Prostate gland (tissue), 2 donors: ENCODE measurements at regions of chr7 and their contacts with region 1.

Region 1: GRCh38 chr7:38796626-38797501 is 112.1 kb downstream of the VPS41 start:
- DNase-seq: peak; percentile 43
- H3K4me3 ChIP-seq: no peak overlapping the region
- H3K27ac ChIP-seq: no peak overlapping the region
- H3K4me1 ChIP-seq: no peaks in the 10 kb centered on the region
- H3K27me3 ChIP-seq: no peaks in the 10 kb centered on the region
- CTCF ChIP-seq: peak; percentile 47 to 85 (median 80)
- POLR2A ChIP-seq: no peak

Region 2: DNA sequence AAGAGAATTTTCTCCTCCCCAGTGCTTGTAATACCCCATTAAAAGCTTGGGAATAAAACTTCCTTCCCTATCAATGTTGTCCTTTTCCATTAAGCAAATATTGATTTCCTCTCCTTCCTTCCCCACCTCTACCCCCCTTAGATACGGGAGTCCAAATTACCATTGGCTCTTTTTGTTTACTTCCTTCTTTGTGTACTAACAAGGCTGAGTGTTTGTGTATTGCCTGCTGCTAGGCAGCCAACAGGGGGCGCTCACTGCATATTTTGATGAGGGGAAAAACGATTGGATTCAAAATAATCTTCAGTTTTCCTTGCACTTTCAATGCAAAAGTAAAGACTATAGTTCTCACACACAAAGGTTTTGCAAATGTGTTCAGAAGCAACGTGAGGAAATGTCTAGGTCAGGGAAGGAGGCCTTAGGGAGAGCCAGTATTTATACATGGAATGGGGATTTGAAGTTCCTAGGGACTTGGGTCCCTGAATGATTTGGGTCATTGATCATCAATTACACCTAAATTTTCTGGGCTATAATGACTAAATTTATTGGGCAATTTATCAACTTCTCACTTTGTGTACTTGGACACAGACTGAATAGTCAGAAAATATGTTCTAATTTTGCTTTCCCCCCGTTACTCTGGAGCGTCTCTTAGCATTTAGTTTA is 135.8 kb after region 1 on chr7:
- intact Hi-C with region 1: loop called (anchors 5 kb)
- DNase-seq: peak; percentile 40
- H3K4me3 ChIP-seq: no peak overlapping the region
- H3K27ac ChIP-seq: no peak overlapping the region
- H3K4me1 ChIP-seq: no peaks in the 10 kb centered on the region
- H3K27me3 ChIP-seq: no peaks in the 10 kb centered on the region
- CTCF ChIP-seq: peak; percentile 54 to 73 (median 62)
- POLR2A ChIP-seq: no peak

Region 3: GRCh38 chr7:39465055-39465929 is 668.4 kb after region 1 on chr7:
- intact Hi-C with region 1: loop called (anchors 5 kb)
- DNase-seq: peak; percentile 29
- H3K4me3 ChIP-seq: no peak overlapping the region
- H3K27ac ChIP-seq: no peak overlapping the region
- H3K4me1 ChIP-seq: no peaks in the 10 kb centered on the region
- H3K27me3 ChIP-seq: no peaks in the 10 kb centered on the region
- CTCF ChIP-seq: peak; percentile 12 to 79 (median 66)
- POLR2A ChIP-seq: no peak

Region 4: GRCh38 chr7:39517240-39517639 is 720.4 kb after region 1 on chr7:
- intact Hi-C with region 1: loop called (anchors 2 kb)
- DNase-seq: no peak
- H3K4me3 ChIP-seq: no peak overlapping the region
- H3K27ac ChIP-seq: no peak overlapping the region
- H3K4me1 ChIP-seq: no peaks in the 10 kb centered on the region
- H3K27me3 ChIP-seq: no peaks in the 10 kb centered on the region
- CTCF ChIP-seq: no peak
- POLR2A ChIP-seq: no peak